ENCODE measurements at regions of chr1 and their contacts with region 1.

Region 1: DNA sequence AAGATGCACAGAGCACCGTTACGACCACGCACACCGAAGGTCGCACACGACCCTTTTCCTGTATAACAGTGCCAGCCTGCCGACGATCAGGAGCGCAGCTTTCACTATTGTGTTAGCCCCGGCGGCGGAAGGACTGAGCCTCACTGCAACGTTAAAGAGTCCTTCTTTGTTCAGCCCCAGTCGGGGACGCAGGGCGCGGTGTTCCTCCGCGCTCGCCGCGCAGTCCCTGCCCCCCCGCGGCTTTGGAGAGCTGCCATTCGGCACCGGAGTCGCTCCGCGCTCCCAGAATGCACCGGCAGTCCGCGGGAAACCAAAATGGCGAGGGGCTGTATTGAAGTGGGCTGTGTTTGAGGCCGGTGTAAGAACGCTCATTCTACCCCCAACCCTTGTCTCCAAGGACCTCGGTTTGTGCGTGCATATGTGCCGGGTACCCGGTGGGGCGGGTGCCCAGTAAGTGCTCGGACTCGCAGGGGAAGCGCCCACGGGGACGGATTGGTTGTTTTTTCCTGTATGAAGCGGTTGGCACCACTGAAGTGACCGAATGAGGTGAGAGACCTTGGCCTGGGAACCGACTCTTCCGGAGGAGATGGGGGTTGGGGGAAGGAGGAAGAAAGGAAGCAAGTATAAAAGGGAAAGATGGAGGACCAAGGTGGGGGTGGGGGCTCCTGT is at the start of gene MTF2:
- DNase-seq: peak; percentile 93
- H3K4me3 Mint-ChIP-seq: peak within 1 kb of the TSS; percentile 98
- H3K27ac Mint-ChIP-seq: peak within 1 kb of the TSS; percentile 95
- H3K4me1 Mint-ChIP-seq: peaks cover 58% of the 10 kb centered on the region
- H3K27me3 Mint-ChIP-seq: no peaks in the 10 kb centered on the region
- total RNA-seq, gene MTF2: 68.4 and 71.0 TPM in 2 replicates

Region 2: GRCh38 chr1:92298573-92299476 is 780.3 kb before region 1 on chr1 and contains the starts of genes GLMN and RPAP2:
- intact Hi-C with region 1: loop called (anchors 5 kb)
- DNase-seq: peak; percentile 74
- H3K4me3 Mint-ChIP-seq: peak within 1 kb of the TSS; percentile 97
- H3K27ac Mint-ChIP-seq: peak within 1 kb of the TSS; percentile 99
- H3K4me1 Mint-ChIP-seq: peaks cover 40% of the 10 kb centered on the region
- H3K27me3 Mint-ChIP-seq: no peaks in the 10 kb centered on the region
- total RNA-seq, gene GLMN: 29.2 and 29.7 TPM in 2 replicates
- total RNA-seq, gene RPAP2: 42.0 and 44.8 TPM in 2 replicates

Region 3: DNA sequence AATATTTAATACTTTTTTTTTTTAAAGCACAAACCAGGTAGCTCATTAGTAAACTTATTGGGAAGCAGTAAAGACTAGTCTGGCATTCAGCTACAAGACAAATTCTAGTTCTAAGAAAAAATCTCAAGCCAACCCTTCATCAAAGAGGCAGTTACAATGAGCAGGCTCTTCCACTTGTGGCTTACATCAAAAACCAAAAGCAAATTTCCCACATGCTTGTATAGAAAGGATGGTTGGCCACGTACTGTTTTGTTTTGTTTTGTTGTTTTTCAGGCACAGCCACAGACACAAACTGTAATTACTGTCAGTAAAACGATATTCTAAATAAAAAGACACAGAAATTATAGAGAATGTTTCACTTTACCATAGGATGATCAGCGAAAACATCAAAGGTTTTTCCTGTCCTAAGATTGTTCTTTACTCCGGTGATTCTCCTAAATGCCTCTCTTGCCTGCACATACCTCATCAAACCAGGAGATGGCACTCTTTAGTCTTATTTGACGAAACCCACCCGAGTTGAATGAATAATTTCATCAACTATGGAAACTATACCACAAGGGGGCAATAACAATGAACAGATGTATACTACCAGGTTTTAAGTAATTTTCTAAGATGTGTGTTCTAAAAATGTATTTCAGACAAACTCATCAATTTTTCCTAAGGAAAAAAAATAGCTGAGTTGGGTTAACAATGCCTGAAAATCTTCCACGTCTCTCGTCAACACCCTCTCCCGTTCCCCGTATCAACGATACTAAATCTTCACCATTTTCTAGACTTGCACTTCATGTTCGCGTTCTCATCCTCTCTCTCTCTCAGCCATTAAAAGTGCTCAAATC is 220.3 kb before region 1 on chr1:
- intact Hi-C with region 1: loop called (anchors 5 kb)
- DNase-seq: peak; percentile 57
- H3K4me3 Mint-ChIP-seq: peak overlapping the region; percentile 46
- H3K27ac Mint-ChIP-seq: peak overlapping the region; percentile 64
- H3K4me1 Mint-ChIP-seq: peaks cover 24% of the 10 kb centered on the region
- H3K27me3 Mint-ChIP-seq: no peaks in the 10 kb centered on the region

Region 4: DNA sequence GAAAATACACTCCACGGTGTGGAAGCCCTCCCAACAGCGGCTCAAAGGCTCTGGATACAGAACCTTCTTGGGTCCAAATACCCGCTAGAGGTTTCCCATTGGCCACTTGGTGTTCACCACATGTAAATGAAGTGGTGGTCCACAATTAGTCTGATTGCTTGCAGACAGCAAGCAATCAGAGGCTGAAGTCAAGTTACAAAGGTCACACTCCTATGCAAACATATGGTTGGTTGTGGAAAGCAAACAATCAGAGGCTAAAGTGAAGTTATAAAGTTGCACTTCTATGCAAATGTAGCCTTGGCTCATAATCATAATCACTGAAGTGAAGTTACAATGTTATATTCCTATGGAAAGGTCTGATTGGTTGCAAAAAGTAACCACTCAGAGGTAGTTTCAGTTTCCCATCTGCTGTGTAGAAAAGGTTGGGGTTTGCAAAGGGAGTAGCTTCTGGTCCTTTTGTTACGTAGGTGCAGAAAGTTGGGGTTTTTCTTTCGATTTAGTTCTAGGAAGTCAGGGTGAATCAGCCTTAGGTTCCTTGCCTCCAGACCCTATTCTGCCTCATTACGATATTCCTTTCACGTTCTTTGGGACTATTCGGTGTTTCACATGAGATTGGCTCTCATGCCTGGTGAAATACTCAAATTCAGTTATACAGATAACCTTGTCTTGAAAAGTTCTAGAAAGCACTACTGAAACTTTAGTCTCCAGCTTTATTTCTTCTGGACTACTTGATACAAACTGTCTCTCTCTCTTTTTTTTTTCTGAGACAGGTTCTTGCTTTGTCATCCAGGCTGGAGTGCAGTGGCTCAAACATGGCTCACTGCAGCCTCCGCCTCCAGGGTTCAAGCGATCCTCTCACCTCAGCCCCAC is 36.7 kb before region 1 on chr1:
- intact Hi-C with region 1: loop called (anchors 1 kb)
- DNase-seq: peak; percentile 53
- H3K4me3 Mint-ChIP-seq: peak overlapping the region; percentile 74
- H3K27ac Mint-ChIP-seq: peak overlapping the region; percentile 84
- H3K4me1 Mint-ChIP-seq: peaks cover 37% of the 10 kb centered on the region
- H3K27me3 Mint-ChIP-seq: no peaks in the 10 kb centered on the region

Region 5: GRCh38 chr1:93304716-93305138 is 225.6 kb after region 1 on chr1:
- intact Hi-C with region 1: loop called (anchors 2 kb)
- DNase-seq: peak; percentile 25
- H3K4me3 Mint-ChIP-seq: no peak overlapping the region
- H3K27ac Mint-ChIP-seq: no peak overlapping the region
- H3K4me1 Mint-ChIP-seq: peaks cover 5% of the 10 kb centered on the region
- H3K27me3 Mint-ChIP-seq: no peaks in the 10 kb centered on the region

Measured in activated T-helper 1 cell treated with anti-CD3 and anti-CD28 coated beads, Interleukin-12 subunit alpha, Interleukin-12 subunit beta, Interleukin-2, Interleukin-4 antibody, amounts not matched to agents 30 ng/mL and 10 ng/mL and 1 ng/mL, durations not matched to agents 14 hours and 24 hours and 36 hours (primary cell).